H1 (cell line): ENCODE measurements at regions of chr2 and their contacts with region 1.

Region 1: GRCh38 chr2:157596992-157597681 is 31.5 kb downstream of the ACVR1C start:
- DNase-seq: peak; percentile 21 to 83
- H3K4me3 ChIP-seq: peak overlapping the region; percentile 4 to 50 (median 24); a peak in 6 of 8 replicates
- H3K27ac ChIP-seq: no peak overlapping the region
- H3K4me1 ChIP-seq: no peaks in the 10 kb centered on the region
- H3K27me3 ChIP-seq: peaks cover 0 to 5% (median 3%) of the 10 kb centered on the region in 4 experiments; a peak in 2 of 7 replicates
- CTCF ChIP-seq: peak; percentile 73 to 82 (median 74)
- EP300 ChIP-seq: no peak
- POLR2A ChIP-seq: no peak
- RAD21 ChIP-seq: peak; percentile 71 to 80

Region 2: GRCh38 chr2:157497638-157498314 is 99.4 kb before region 1 on chr2:
- CTCF ChIA-PET with region 1: interaction called, 24 read pairs
- POLR2A ChIA-PET with region 1: no interaction called
- DNase-seq: no peak
- H3K4me3 ChIP-seq: no peak overlapping the region
- H3K27ac ChIP-seq: no peak overlapping the region
- H3K4me1 ChIP-seq: no peaks in the 10 kb centered on the region
- H3K27me3 ChIP-seq: no peaks in the 10 kb centered on the region
- CTCF ChIP-seq: peak in 2 of 3 experiments; percentile 75 to 87; a peak in 3 of 4 replicates
- EP300 ChIP-seq: no peak
- POLR2A ChIP-seq: no peak
- RAD21 ChIP-seq: peak; percentile 91 to 93

Region 3: GRCh38 chr2:157538064-157538463 is 59.1 kb before region 1 on chr2:
- CTCF ChIA-PET with region 1: no interaction called
- POLR2A ChIA-PET with region 1: no interaction called
- DNase-seq: no peak
- H3K4me3 ChIP-seq: no peak overlapping the region
- H3K27ac ChIP-seq: no peak overlapping the region
- H3K4me1 ChIP-seq: peaks cover 0 to 3% (median 0%) of the 10 kb centered on the region in 4 experiments; a peak in 1 of 7 replicates
- H3K27me3 ChIP-seq: peaks cover 0 to 1% (median 0%) of the 10 kb centered on the region in 4 experiments; a peak in 1 of 7 replicates
- CTCF ChIP-seq: no peak
- EP300 ChIP-seq: no peak
- POLR2A ChIP-seq: no peak
- RAD21 ChIP-seq: no peak